ENCODE measurements at regions of chr15 and their contacts with region 1.

Region 1: DNA sequence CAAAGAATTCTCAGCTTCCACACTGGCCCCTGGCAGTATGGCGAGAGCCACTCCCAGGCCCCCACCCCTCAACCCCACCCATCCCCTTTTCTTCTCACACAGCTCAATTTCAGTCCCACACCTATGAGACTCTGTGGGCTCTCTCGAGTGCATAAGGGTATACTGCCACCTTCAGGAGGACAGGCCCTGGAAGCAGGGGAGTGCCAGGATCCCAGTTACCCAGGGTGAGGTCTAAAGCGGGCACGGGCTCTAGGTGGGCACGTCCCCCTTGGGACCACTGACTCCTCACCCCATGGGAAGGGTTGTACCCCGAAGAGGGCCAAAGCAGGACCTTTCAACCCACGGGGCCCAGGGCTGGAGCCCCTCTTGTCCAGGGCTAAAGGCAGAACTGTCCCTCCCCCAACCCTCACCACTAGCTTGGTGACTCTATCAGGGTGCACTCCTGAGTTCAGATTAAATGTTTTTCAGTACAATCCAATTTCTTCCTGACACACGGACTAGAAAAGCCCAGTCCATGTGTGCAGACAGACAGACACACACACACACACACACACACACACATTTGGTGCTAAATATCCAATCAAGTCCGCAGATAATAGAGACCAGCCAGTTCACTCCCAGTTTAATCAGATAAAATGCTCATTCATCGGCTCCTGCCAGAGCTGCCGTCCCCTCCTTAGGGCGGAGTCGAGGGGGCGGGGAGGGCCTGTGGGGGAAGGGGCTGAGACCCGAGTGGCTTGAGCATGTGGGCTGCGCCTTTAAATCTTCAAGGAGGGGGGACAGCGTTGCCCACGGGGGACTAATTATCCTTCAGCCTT is 59.4 kb downstream of the CYP11A1 start:
- DNase-seq: peak; percentile 49
- ATAC-seq: peak; percentile 47
- H3K4me3 ChIP-seq: no peak overlapping the region
- H3K4me3 Mint-ChIP-seq: no peak overlapping the region
- H3K27ac ChIP-seq: no peak overlapping the region
- H3K27ac Mint-ChIP-seq: no peak overlapping the region
- H3K4me1 ChIP-seq: no peaks in the 10 kb centered on the region
- H3K4me1 Mint-ChIP-seq: no peaks in the 10 kb centered on the region
- H3K27me3 ChIP-seq: peaks cover 0 to 25% (median 5%) of the 10 kb centered on the region in 4 experiments
- H3K27me3 Mint-ChIP-seq: peaks cover 54% of the 10 kb centered on the region
- CTCF ChIP-seq: peak; percentile 48

Region 2: GRCh38 chr15:74322181-74323076 is 14.4 kb after region 1 on chr15:
- CTCF ChIA-PET with region 1: interaction called, 17 read pairs
- POLR2A ChIA-PET with region 1: no interaction called
- intact Hi-C with region 1: no loop called
- DNase-seq: peak; percentile 68
- ATAC-seq: peak; percentile 73
- H3K4me3 ChIP-seq: no peak overlapping the region
- H3K4me3 Mint-ChIP-seq: no peak overlapping the region
- H3K27ac ChIP-seq: no peak overlapping the region
- H3K27ac Mint-ChIP-seq: no peak overlapping the region
- H3K4me1 ChIP-seq: peaks cover 0 to 19% of the 10 kb centered on the region in 2 donors
- H3K4me1 Mint-ChIP-seq: peaks cover 2% of the 10 kb centered on the region
- H3K27me3 ChIP-seq: peaks cover 0 to 10% (median 0%) of the 10 kb centered on the region in 4 experiments
- H3K27me3 Mint-ChIP-seq: peaks cover 21% of the 10 kb centered on the region
- CTCF ChIP-seq: peak; percentile 73

Measured in B cell (primary cell).